H1 (cell line): ENCODE measurements at regions of chr6 and their contacts with region 1.

Region 1: DNA sequence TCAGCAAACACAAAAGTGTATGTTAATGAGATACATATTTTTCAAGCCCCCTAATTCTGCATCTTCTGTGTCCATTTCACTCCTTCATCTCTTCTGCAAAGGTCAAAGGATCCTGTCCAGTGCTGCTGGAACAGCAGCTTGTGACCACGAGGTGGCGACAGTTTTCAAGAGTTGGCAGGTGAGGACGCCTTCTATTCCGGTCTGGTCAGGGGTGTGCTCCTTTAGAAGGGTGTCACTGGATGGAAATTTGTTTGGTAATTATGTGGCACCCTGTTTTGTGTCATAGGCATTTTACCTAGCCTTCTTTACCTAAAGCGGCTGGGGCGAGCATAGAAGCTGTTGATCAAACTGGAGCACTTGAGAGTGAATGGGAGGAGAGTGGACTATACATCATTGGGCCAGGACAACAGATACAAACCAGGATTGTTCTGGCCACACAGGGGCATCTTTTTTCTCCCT is 32.9 kb upstream of the ERVFRD-1 start:
- DNase-seq: peak; percentile 38 to 82
- H3K4me3 ChIP-seq: no peak overlapping the region
- H3K27ac ChIP-seq: no peak overlapping the region
- H3K4me1 ChIP-seq: peaks cover 0 to 7% (median 4%) of the 10 kb centered on the region in 4 experiments; a peak in 3 of 7 replicates
- H3K27me3 ChIP-seq: no peaks in the 10 kb centered on the region
- CTCF ChIP-seq: peak; percentile 88 to 94 (median 92)
- EP300 ChIP-seq: no peak
- POLR2A ChIP-seq: no peak
- RAD21 ChIP-seq: peak; percentile 96 to 97

Region 2: DNA sequence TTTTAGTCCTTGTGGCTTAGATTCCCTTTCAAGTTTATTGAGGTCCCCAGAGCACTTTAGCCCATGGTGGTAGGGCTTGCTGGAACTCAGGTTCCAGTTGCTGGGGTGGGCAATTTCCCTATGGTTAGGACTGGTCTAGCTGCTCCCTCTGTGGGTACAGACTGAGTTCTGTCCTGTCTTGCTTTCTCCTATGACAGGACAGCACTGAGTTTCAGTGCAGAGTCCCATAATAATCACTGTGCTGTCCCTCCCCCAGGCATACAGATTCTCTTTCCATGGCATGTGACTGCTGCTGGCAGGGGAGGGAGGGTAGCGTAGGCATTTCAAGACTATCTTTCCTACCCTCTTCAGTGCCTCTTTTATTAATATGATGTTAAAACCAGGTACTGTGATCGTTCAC is 15.8 kb before region 1 on chr6:
- CTCF ChIA-PET with region 1: interaction called, 13 read pairs
- POLR2A ChIA-PET with region 1: no interaction called
- DNase-seq: peak in 1 of 2 experiments; percentile 39
- H3K4me3 ChIP-seq: no peak overlapping the region
- H3K27ac ChIP-seq: no peak overlapping the region
- H3K4me1 ChIP-seq: peaks cover 0 to 9% (median 3%) of the 10 kb centered on the region in 4 experiments; a peak in 4 of 7 replicates
- H3K27me3 ChIP-seq: no peaks in the 10 kb centered on the region
- CTCF ChIP-seq: no peak
- EP300 ChIP-seq: no peak
- POLR2A ChIP-seq: no peak
- RAD21 ChIP-seq: peak in 1 of 2 experiments; percentile 16; a peak in 1 of 4 replicates

Region 3: DNA sequence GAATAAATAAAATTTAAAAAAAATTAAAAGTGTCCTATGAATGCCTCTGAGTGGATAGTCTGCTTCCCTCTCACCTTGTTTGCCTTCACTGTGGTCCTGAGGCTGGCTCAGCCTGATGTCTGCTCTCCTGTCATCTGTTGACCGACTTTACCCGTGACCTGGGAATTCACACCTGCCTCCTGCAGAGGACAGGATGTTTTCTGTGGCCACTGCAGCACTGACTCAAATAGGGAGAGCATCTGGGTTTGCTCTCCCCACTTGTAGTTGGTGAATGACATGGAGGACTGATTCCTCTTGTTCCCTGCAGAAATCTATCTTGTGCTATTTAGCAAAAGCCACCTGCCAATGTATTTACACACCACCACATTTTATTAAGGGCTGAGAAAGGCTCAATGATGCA is 19.5 kb after region 1 on chr6:
- CTCF ChIA-PET with region 1: interaction called, 10 read pairs
- POLR2A ChIA-PET with region 1: no interaction called
- DNase-seq: no peak
- H3K4me3 ChIP-seq: no peak overlapping the region
- H3K27ac ChIP-seq: no peak overlapping the region
- H3K4me1 ChIP-seq: no peaks in the 10 kb centered on the region; a peak in 1 of 7 replicates
- H3K27me3 ChIP-seq: no peaks in the 10 kb centered on the region
- CTCF ChIP-seq: no peak
- EP300 ChIP-seq: no peak
- POLR2A ChIP-seq: no peak
- RAD21 ChIP-seq: no peak

Region 4: DNA sequence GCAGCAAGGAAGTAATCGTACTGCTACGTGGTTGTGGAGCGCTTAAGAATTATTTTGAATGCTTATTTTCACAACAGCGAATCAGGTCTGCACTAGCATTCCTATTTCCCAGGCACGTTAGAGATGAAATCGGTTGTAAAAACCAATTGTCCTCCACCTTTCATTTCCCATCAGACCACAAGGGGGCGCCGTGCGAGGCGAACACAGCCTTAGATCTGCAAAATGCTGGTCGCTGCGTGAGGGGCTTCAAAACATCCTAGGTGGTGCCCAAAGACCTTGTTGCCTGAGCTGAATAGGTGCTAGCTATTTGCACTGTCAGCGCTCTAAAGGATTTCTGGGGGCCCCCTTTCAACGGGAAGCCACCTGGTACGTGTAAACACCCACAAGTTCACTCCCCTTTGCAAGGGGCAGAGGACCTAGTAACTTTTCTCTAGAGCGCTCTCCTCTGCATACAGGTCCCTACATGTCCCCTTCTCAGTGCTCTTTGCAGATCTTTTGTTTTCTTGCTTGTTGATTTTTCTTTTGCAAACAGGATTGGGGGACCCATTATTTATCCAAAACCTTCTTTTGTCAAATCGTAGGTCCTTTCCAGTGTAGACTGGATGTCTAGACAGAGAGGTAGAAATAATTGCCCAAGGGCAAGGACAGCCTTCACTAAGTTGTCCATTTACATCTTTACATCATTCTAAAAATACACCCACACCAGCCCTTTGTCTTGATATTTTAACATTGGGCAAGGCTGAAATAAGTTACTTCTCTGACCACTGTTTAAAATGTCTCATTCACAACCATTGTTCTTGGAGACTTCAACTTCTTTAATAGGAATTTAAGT is 28.3 kb after region 1 on chr6:
- CTCF ChIA-PET with region 1: interaction called, 24 read pairs
- POLR2A ChIA-PET with region 1: no interaction called
- DNase-seq: peak; percentile 49 to 95
- H3K4me3 ChIP-seq: 0 out of 8 replicates have a peak overlapping the region, but pooled peaks of 1 of the 4 experiments have one; percentile 19
- H3K27ac ChIP-seq: no peak overlapping the region
- H3K4me1 ChIP-seq: peaks cover 0 to 7% (median 0%) of the 10 kb centered on the region in 4 experiments; a peak in 2 of 7 replicates
- H3K27me3 ChIP-seq: no peaks in the 10 kb centered on the region
- CTCF ChIP-seq: peak; percentile 84 to 92 (median 88)
- EP300 ChIP-seq: no peak
- POLR2A ChIP-seq: no peak
- RAD21 ChIP-seq: peak; percentile 76 to 86